Head of caudate nucleus (tissue), 42 donors: ENCODE measurements at regions of chr14 and their contacts with region 1.

Region 1: GRCh38 chr14:77799863-77800730 is at the start of gene ADCK1:
- DNase-seq: peak; percentile 89 to 98 (median 94)

Region 2: GRCh38 chr14:77760381-77761246 is 39.5 kb before region 1 on chr14 and contains the start of gene SNW1:
- intact Hi-C with region 1: loop called (anchors 5 kb)
- DNase-seq: peak; percentile 92 to 98 (median 96)

Region 3: DNA sequence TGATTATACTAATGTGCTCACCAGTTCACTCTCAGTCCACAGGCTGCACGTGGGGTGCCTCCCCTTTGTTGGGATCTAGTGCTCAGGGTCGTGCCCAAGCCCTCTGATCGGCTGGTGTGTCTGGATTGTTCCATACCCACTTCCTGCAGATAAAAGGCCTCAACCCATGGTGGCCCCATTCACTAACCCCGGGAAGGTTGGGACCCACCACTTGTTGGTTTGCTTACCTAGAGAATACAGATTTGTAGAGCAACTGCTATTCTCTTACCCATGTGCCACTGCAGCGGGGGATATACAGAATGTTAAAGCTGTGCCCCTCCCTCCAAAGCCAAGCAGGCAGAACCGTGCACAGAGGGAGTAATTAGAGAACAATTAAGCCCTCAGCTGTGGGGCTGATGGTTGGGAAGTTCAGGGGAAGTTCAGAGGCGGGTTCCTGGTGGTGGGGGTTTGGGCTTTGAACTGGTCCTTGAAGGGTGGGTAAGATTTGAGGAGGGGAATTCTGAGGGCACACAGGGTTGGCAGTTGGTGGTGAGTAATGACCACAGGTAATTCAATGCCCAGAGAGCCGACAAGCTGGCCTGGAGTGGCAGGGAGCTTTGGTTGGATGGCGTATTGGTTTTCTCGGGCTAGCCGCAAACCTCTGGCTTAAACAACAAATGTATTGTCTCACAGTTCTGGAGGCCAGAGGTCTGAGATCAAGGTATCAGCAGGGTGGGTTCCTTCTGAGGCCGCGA is 68.6 kb after region 1 on chr14:
- intact Hi-C with region 1: no loop called
- DNase-seq: no peak